ENCODE measurements at regions of chr13 and their contacts with region 1.

Region 1: GRCh38 chr13:49996951-49997895 is at the start of gene TRIM13:
- DNase-seq: peak; percentile 82
- ATAC-seq: peak; percentile 72
- H3K4me3 Mint-ChIP-seq: peak within 1 kb of the TSS; percentile 88
- H3K27ac Mint-ChIP-seq: peak within 1 kb of the TSS; percentile 93
- H3K4me1 Mint-ChIP-seq: peaks cover 54% of the 10 kb centered on the region
- H3K27me3 Mint-ChIP-seq: no peaks in the 10 kb centered on the region
- CTCF ChIP-seq: peak; percentile 49
- total RNA-seq, gene TRIM13: 49.3 and 54.4 TPM in 2 replicates

Region 2: GRCh38 chr13:49374585-49375290 is 622.5 kb before region 1 on chr13:
- CTCF ChIA-PET with region 1: no interaction called
- POLR2A ChIA-PET with region 1: no interaction called
- intact Hi-C with region 1: no loop called
- DNase-seq: no peak
- ATAC-seq: peak; percentile 64
- H3K4me3 Mint-ChIP-seq: peak overlapping the region; percentile 30
- H3K27ac Mint-ChIP-seq: peak overlapping the region; percentile 36
- H3K4me1 Mint-ChIP-seq: peaks cover 52% of the 10 kb centered on the region
- H3K27me3 Mint-ChIP-seq: no peaks in the 10 kb centered on the region
- CTCF ChIP-seq: no peak

Region 3: GRCh38 chr13:50015258-50015657 is 18.0 kb after region 1 on chr13 and contains the start of gene KCNRG:
- CTCF ChIA-PET with region 1: interaction called, 5 read pairs
- POLR2A ChIA-PET with region 1: interaction called, 23 read pairs
- intact Hi-C with region 1: loop called (anchors 2 kb)
- DNase-seq: no peak
- ATAC-seq: no peak
- H3K4me3 Mint-ChIP-seq: no peak within 1 kb of the TSS
- H3K27ac Mint-ChIP-seq: peak within 1 kb of the TSS; percentile 43
- H3K4me1 Mint-ChIP-seq: peaks cover 33% of the 10 kb centered on the region
- H3K27me3 Mint-ChIP-seq: no peaks in the 10 kb centered on the region
- CTCF ChIP-seq: no peak
- total RNA-seq, gene KCNRG: 1.9 and 3.1 TPM in 2 replicates

Region 4: DNA sequence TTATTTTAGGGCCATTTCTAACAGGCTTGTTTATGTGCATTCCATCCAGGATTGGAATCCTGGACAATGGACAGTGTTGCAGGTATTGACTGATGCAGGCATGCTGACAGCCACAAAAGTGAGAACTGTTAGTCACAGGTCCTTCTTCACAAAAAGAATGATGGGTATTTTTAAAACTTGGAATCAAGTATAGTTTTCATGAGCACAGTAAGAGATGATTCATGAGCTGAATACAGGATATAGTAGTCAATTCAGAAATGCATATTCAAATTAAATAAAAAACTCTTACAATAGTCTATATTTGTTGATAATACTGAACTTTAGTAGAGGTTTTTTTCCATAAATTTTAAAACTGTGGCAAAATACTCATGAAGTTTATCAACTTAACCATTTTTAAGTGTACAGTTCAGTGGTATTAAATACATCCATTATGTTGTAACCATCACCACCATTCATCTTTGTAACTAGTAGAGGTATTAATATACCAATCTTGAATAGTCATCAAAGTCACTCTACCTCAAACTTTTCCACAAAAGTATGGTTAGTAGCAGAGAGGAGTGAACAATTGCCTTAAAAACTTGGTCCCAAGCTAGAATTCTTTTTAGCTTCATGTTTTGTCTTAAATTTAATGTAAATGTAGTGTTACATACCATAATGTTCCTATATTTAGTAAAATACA is 97.5 kb after region 1 on chr13:
- CTCF ChIA-PET with region 1: no interaction called
- POLR2A ChIA-PET with region 1: interaction called, 20 read pairs
- intact Hi-C with region 1: no loop called
- DNase-seq: no peak
- ATAC-seq: no peak
- H3K4me3 Mint-ChIP-seq: no peak overlapping the region
- H3K27ac Mint-ChIP-seq: no peak overlapping the region
- H3K4me1 Mint-ChIP-seq: peaks cover 32% of the 10 kb centered on the region
- H3K27me3 Mint-ChIP-seq: no peaks in the 10 kb centered on the region
- CTCF ChIP-seq: no peak

Region 5: DNA sequence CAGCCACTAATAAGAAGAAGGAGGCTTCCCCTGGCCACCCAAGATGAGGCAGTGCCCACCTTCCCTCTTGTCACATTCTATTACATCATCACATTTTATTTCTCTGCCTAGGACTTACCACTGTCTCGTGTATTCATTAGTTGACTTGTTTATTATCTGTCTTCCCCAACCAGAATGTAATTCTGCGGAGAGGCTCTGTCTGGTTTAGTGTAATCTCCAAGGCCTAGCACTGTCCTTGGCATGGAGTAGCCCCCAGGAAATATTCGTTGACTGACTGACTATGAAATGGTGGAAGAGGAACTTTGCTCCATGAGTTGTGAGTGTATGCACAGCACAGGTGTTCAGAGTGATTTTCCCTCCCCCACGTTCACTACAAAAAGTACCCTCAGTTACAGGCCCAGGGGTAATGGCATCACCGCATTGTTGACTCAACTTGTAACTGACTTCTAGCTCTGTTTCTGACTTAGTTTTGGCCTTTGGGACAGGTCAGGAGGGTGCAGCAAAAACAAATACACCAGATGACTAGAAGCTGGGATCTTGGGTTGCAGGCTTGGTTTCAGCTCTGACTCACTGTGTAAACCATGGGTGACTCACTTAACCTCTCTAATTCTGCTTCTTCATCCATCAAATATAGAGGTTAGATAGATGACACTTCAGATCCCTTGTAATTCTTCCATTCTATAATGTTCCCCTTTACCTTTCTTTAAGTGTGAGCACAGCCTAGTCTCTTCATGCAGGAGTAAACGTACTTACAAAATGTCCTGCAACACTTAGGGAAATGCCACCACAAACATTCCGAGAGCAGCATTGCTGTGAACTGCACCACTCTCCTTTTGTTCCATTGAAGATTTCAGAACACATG is 247.7 kb after region 1 on chr13:
- CTCF ChIA-PET with region 1: no interaction called
- POLR2A ChIA-PET with region 1: interaction called, 16 read pairs
- intact Hi-C with region 1: no loop called
- DNase-seq: no peak
- ATAC-seq: peak; percentile 92
- H3K4me3 Mint-ChIP-seq: peak overlapping the region; percentile 2
- H3K27ac Mint-ChIP-seq: peak overlapping the region; percentile 91
- H3K4me1 Mint-ChIP-seq: peaks cover 40% of the 10 kb centered on the region
- H3K27me3 Mint-ChIP-seq: no peaks in the 10 kb centered on the region
- CTCF ChIP-seq: no peak

Region 6: GRCh38 chr13:50531917-50532899 is 535.0 kb after region 1 on chr13:
- CTCF ChIA-PET with region 1: interaction called, 6 read pairs
- POLR2A ChIA-PET with region 1: interaction called, 5 read pairs
- intact Hi-C with region 1: loop called (anchors 1 kb)
- DNase-seq: no peak
- ATAC-seq: no peak
- H3K4me3 Mint-ChIP-seq: no peak overlapping the region
- H3K27ac Mint-ChIP-seq: no peak overlapping the region
- H3K4me1 Mint-ChIP-seq: peaks cover 15% of the 10 kb centered on the region
- H3K27me3 Mint-ChIP-seq: no peaks in the 10 kb centered on the region
- CTCF ChIP-seq: no peak

Region 7: DNA sequence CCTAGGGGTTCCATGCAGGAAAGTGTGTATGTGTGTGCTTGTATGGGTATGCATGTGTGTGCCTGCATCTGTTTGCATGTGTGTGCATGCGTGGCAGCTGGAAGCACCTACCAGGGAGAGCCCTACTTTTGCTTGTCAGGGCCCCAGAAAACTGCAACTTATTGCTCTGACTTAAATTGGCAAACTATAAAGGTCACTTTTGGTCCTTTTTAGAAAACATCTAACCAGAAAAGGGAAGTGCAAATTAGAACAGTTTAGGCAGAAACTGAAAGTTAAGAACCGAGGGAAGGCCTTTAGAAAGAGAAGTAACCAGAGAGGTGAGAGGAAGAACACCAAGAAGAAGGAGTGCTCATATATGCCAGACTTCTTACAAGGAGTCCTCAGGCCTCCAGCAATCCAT is 813.8 kb after region 1 on chr13:
- CTCF ChIA-PET with region 1: interaction called, 3 read pairs
- POLR2A ChIA-PET with region 1: interaction called, 11 read pairs
- intact Hi-C with region 1: no loop called
- DNase-seq: no peak
- ATAC-seq: peak; percentile 93
- H3K4me3 Mint-ChIP-seq: peak overlapping the region; percentile 65
- H3K27ac Mint-ChIP-seq: peak overlapping the region; percentile 84
- H3K4me1 Mint-ChIP-seq: peaks cover 43% of the 10 kb centered on the region
- H3K27me3 Mint-ChIP-seq: no peaks in the 10 kb centered on the region
- CTCF ChIP-seq: no peak

Measured in activated B cell treated with CpG ODN at 0.5 μM for 24 hours (primary cell).